ENCODE measurements at regions of chr7 and their contacts with region 1.

Region 1: GRCh38 chr7:37901236-37901827 is 15.3 kb downstream of the SFRP4 start:
- DNase-seq: no peak
- ATAC-seq: peak; percentile 44
- H3K4me3 Mint-ChIP-seq: no peak overlapping the region
- H3K27ac Mint-ChIP-seq: no peak overlapping the region
- H3K4me1 Mint-ChIP-seq: no peaks in the 10 kb centered on the region
- H3K27me3 Mint-ChIP-seq: peaks cover 2% of the 10 kb centered on the region

Region 2: GRCh38 chr7:37259319-37259821 is 642.0 kb before region 1 on chr7:
- CTCF ChIA-PET with region 1: no interaction called
- POLR2A ChIA-PET with region 1: no interaction called
- intact Hi-C with region 1: no loop called
- DNase-seq: no peak
- ATAC-seq: no peak
- H3K4me3 Mint-ChIP-seq: no peak overlapping the region
- H3K27ac Mint-ChIP-seq: peak overlapping the region; percentile 47
- H3K4me1 Mint-ChIP-seq: peaks cover 26% of the 10 kb centered on the region
- H3K27me3 Mint-ChIP-seq: no peaks in the 10 kb centered on the region

Region 3: DNA sequence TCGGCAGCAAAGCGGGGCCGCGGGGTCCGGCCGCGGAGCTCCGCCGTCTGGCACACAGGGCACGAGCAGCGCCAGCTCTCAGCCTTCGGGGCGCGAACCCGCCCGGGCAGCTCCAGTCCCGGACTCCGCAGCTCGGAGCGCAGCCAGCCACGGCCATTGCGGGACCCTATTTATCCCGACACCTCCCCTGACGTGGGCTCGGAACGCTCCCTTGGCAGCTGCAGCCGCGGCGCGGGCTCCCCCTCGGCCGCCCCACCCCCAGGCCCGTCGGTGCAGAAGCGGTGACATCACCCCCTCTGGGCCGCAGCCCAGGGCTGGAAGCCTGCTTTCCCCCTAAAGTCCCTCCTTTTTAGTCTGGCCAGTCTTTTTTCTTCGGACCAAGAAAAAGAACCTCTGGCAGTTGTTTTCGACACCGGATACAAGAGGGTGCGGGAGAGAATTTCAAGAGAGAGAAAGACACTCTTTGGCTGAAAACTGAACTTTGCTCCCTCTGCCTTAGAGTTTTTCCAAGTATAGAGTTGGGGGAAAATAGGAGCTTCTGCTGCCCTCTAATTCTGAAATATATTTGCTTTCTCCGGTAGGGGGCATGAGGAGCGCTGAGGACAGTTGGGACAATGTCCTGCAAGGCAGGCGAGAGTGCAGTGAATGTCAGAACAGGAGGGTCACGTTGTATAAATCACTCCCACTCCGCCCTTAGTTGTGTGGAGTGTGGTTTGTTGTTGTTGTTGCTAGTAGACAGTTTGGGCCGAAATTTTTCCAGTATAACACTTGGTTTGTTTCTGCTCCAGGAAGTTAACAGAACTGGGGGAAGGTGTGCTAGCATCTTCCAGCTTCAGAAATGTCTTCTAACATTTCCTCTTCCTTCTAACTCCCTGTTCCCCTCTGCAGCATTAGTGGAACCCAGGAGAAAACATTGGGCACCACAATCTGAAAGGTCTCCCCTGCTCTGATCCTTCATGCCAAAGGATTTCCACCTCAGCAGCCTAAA is 15.6 kb after region 1 on chr7 and contains the start of gene SFRP4:
- CTCF ChIA-PET with region 1: interaction called, 19 read pairs
- POLR2A ChIA-PET with region 1: no interaction called
- intact Hi-C with region 1: no loop called
- DNase-seq: peak; percentile 34
- ATAC-seq: no peak
- H3K4me3 Mint-ChIP-seq: peak within 1 kb of the TSS; percentile 35
- H3K27ac Mint-ChIP-seq: no peak within 1 kb of the TSS
- H3K4me1 Mint-ChIP-seq: peaks cover 15% of the 10 kb centered on the region
- H3K27me3 Mint-ChIP-seq: peaks cover 52% of the 10 kb centered on the region
- total RNA-seq, gene SFRP4: not detected

Region 4: GRCh38 chr7:38016567-38016966 is 115.2 kb after region 1 on chr7:
- CTCF ChIA-PET with region 1: no interaction called
- POLR2A ChIA-PET with region 1: no interaction called
- intact Hi-C with region 1: no loop called
- DNase-seq: no peak
- ATAC-seq: no peak
- H3K4me3 Mint-ChIP-seq: no peak overlapping the region
- H3K27ac Mint-ChIP-seq: no peak overlapping the region
- H3K4me1 Mint-ChIP-seq: no peaks in the 10 kb centered on the region
- H3K27me3 Mint-ChIP-seq: peaks cover 2% of the 10 kb centered on the region

Region 5: DNA sequence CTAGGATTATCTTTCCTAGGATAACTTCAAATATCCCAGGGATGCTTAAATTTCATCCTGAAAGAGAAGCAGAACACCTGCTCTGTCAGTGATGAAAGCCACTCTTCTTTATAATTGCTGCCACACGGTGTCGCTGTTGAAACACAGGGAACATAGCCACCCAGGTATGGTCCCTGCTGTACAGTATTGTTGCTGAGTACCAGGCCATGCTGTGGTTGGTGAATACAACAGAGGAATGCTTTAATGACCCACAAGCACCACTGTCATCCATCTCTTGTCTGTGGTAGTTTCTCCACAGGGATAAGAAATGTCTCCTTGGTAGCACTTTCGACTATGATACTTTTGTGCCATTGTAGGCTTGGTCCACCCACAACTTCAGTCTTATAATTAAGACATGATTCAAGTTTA is 206.2 kb after region 1 on chr7:
- CTCF ChIA-PET with region 1: interaction called, 6 read pairs
- POLR2A ChIA-PET with region 1: no interaction called
- intact Hi-C with region 1: loop called (anchors 5 to 10 kb)
- DNase-seq: peak; percentile 80
- ATAC-seq: peak; percentile 85
- H3K4me3 Mint-ChIP-seq: no peak overlapping the region
- H3K27ac Mint-ChIP-seq: no peak overlapping the region
- H3K4me1 Mint-ChIP-seq: no peaks in the 10 kb centered on the region
- H3K27me3 Mint-ChIP-seq: peaks cover 16% of the 10 kb centered on the region